ENCODE measurements at regions of chr20 and their contacts with region 1.

Region 1: GRCh38 chr20:50120897-50121693 is 8.1 kb upstream of the UBE2V1 start:
- DNase-seq: peak; percentile 60
- H3K4me3 ChIP-seq: no peak overlapping the region
- H3K27ac ChIP-seq: no peak overlapping the region
- H3K4me1 ChIP-seq: no peaks in the 10 kb centered on the region
- H3K27me3 ChIP-seq: no peaks in the 10 kb centered on the region
- CTCF ChIP-seq: peak; percentile 74

Region 2: DNA sequence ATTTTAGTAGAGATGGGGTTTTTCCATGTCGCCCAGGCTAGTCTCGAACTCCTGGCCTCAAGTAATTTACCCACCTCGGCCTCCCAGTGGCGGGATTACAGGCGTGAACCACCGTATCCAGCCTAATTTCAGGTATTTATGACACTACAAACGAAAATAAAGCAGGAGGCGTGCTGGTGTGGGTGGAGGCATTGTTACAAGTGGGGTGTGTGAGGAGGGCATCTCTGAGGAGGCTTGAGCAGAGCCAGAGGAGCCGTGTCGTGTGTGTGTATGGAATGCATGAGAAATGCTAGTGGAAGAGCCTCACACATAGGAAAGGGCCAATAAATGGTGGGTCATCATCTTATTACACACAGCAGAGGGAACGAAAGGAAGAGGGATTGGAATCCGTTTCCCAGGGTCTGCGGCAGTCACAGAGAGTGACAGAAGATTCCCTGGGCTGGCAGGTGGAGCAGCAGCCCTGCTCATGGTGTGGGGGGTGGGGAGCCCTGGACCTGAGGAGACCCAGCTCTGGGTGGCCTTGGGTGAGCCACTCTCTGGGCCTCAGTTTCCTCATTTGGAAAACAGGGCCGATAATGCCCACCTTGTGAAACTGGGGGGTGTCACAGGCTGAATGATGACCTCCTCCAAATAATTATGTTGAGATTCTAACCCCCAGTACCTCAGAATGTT is 49.6 kb after region 1 on chr20:
- intact Hi-C with region 1: loop called (anchors 2 kb)
- DNase-seq: no peak
- H3K4me3 ChIP-seq: no peak overlapping the region
- H3K27ac ChIP-seq: no peak overlapping the region
- H3K4me1 ChIP-seq: peaks cover under 1% of the 10 kb centered on the region
- H3K27me3 ChIP-seq: no peaks in the 10 kb centered on the region
- CTCF ChIP-seq: no peak

Region 3: GRCh38 chr20:50346372-50347283 is 225.5 kb after region 1 on chr20:
- intact Hi-C with region 1: no loop called
- DNase-seq: peak; percentile 83
- H3K4me3 ChIP-seq: no peak overlapping the region
- H3K27ac ChIP-seq: peak overlapping the region; percentile 45
- H3K4me1 ChIP-seq: no peaks in the 10 kb centered on the region
- H3K27me3 ChIP-seq: no peaks in the 10 kb centered on the region
- CTCF ChIP-seq: no peak